Activated CD8-positive, alpha-beta T cell treated with anti-CD3 and anti-CD28 coated beads for 36 hours (primary cell): ENCODE measurements at regions of chr15 and their contacts with region 1.

Region 1: GRCh38 chr15:88904624-88905327 is 8.4 kb downstream of the MFGE8 start:
- DNase-seq: peak; percentile 96
- ATAC-seq: peak; percentile 98
- H3K4me3 Mint-ChIP-seq: no peak overlapping the region
- H3K27ac Mint-ChIP-seq: peak overlapping the region; percentile 69
- H3K4me1 Mint-ChIP-seq: peaks cover 22% of the 10 kb centered on the region
- H3K27me3 Mint-ChIP-seq: no peaks in the 10 kb centered on the region
- CTCF ChIP-seq: peak; percentile 84

Region 2: GRCh38 chr15:88865498-88866099 is 39.2 kb before region 1 on chr15:
- CTCF ChIA-PET with region 1: no interaction called
- POLR2A ChIA-PET with region 1: no interaction called
- intact Hi-C with region 1: no loop called
- DNase-seq: no peak
- ATAC-seq: no peak
- H3K4me3 Mint-ChIP-seq: no peak overlapping the region
- H3K27ac Mint-ChIP-seq: no peak overlapping the region
- H3K4me1 Mint-ChIP-seq: no peaks in the 10 kb centered on the region
- H3K27me3 Mint-ChIP-seq: no peaks in the 10 kb centered on the region
- CTCF ChIP-seq: no peak

Region 3: DNA sequence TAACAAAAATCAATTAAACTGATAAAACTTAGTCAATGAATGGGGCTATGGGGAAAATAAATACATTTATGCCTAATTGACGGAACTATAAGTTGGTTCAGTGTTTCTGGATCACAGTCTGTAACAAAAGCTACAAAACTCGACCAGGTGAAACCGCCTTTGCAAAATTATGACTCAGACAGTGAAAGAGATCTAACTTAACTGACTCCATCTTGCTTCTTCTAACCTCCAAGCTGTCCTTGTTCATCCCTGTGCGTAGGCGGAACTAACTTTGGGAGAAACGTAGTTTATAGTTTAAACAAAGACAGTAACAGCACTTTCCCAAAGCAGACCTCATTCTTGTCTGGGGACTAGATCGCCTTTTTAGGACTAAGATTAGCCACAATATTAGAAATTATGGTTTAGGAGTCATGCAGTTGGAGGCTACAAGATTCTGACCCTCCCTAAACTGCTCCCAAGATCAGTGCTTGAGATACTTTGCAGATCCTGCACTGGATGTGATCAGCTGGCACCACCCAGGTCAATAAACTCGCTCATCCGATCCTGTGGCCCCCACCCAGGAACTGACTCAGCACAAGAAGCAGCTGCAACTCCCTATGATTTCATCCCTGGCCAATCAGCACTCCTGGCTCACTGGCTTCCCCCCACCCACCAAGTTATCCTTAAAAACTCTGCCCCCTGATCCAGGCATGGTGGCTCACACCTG is 15.6 kb after region 1 on chr15:
- CTCF ChIA-PET with region 1: interaction called, 33 read pairs
- POLR2A ChIA-PET with region 1: interaction called, 3 read pairs
- intact Hi-C with region 1: no loop called
- DNase-seq: no peak
- ATAC-seq: no peak
- H3K4me3 Mint-ChIP-seq: no peak overlapping the region
- H3K27ac Mint-ChIP-seq: no peak overlapping the region
- H3K4me1 Mint-ChIP-seq: peaks cover 19% of the 10 kb centered on the region
- H3K27me3 Mint-ChIP-seq: peaks cover 7% of the 10 kb centered on the region
- CTCF ChIP-seq: no peak

Region 4: GRCh38 chr15:89017370-89018066 is 112.7 kb after region 1 on chr15:
- CTCF ChIA-PET with region 1: interaction called, 40 read pairs
- POLR2A ChIA-PET with region 1: no interaction called
- intact Hi-C with region 1: loop called (anchors 5 kb)
- DNase-seq: peak; percentile 91
- ATAC-seq: peak; percentile 90
- H3K4me3 Mint-ChIP-seq: peak overlapping the region; percentile 51
- H3K27ac Mint-ChIP-seq: no peak overlapping the region
- H3K4me1 Mint-ChIP-seq: peaks cover 12% of the 10 kb centered on the region
- H3K27me3 Mint-ChIP-seq: peaks cover 5% of the 10 kb centered on the region
- CTCF ChIP-seq: peak; percentile 70

Region 5: DNA sequence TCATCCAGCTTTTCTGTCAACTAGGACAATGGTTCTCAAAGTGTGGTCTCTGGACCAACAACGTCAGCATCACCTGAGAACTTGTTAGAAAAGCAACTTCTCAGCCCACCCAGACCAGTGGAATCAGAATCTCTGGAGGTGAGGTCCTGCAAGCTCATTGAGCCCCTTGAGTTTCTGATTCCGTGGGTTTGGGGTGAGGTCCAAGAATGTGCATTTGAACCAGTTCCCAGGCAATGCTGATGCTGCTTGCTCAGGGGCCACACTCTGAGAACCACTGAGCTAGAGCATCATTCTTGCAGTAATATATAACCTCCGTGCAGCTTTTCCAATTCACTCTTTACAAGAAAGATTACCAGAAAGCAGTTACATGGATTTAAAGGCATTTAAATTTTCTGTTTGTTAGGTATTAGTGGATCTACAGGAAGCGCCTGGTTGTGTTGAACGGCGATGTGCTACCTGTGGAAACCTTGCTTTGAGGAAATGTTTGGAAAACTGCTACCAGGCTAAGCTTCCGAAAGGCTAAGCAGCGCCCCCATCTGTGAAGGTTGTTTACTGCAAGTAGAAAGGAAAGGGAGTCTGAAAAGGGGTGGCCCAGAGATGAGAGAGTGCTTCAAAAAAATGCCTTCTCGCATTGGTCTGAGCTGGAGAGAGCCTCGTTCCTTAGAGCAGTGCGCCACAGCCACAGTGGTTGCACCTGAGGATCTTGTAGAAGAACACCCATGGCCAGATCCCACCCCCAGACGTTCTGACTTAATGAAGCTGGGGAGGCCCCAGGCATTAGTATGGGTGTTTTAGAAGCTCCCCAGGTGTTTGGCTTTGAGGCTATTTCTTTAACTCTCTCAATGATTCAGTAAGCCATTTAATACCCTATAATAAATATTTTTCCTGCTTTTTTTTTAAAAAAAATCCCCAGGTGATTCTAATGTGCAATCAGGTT is 266.6 kb after region 1 on chr15:
- CTCF ChIA-PET with region 1: interaction called, 10 read pairs
- POLR2A ChIA-PET with region 1: no interaction called
- intact Hi-C with region 1: loop called (anchors 10 kb)
- DNase-seq: peak; percentile 49
- ATAC-seq: no peak
- H3K4me3 Mint-ChIP-seq: no peak overlapping the region
- H3K27ac Mint-ChIP-seq: no peak overlapping the region
- H3K4me1 Mint-ChIP-seq: peaks cover 29% of the 10 kb centered on the region
- H3K27me3 Mint-ChIP-seq: no peaks in the 10 kb centered on the region
- CTCF ChIP-seq: peak; percentile 80